OCI-LY7 (cell line): ENCODE measurements at regions of chr2 and their contacts with region 1.

Region 1: DNA sequence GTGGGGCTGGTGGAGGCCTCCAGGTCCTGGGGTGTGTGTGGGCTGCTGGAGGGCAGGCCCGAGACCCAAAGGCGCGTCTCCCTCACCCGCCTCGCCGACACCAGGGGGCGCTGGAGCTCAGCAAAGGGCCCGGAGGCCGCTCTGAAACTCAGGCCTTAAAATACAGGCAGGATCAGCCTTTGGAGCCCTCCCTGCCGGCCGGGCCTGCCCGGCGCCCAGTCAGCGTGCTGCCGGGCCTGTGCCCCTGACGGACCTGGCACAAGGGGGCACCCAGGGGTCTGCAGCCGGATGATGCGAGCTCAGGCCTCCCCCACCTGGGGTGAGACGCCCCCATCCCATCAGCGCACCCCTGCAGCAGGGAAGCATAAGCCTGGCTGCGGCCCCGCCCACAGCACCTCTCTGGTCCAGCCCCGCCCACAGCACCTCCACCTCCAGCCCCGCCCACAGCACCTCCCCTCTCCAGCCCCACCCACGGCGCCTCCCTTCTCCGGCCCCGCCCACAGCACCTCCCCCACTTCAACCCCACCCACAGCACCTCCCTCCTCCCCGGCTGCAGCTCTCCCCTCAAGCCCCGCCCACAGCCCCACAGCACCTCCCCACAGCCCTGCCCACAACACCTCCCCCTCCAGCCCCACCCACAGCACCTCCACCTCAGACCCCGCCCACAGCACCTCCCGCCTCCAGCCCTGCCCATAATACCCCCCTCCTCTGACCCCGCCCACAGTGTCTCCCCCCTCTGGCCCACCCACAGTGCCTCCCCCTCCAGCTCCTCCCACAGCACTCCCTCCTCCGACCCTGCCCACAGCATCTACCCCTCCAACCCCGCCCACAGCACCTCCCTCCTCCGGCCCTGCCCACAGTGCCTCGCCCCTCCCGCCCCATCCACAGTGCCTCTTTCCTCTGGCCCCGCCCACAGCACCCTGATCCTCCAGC is 92.8 kb upstream of the OTOS start:
- DNase-seq: peak; percentile 76
- H3K4me3 ChIP-seq: peak overlapping the region; percentile 55
- H3K27ac ChIP-seq: no peak overlapping the region
- H3K4me1 ChIP-seq: peaks cover 8% of the 10 kb centered on the region
- CTCF ChIP-seq: peak; percentile 74

Region 2: DNA sequence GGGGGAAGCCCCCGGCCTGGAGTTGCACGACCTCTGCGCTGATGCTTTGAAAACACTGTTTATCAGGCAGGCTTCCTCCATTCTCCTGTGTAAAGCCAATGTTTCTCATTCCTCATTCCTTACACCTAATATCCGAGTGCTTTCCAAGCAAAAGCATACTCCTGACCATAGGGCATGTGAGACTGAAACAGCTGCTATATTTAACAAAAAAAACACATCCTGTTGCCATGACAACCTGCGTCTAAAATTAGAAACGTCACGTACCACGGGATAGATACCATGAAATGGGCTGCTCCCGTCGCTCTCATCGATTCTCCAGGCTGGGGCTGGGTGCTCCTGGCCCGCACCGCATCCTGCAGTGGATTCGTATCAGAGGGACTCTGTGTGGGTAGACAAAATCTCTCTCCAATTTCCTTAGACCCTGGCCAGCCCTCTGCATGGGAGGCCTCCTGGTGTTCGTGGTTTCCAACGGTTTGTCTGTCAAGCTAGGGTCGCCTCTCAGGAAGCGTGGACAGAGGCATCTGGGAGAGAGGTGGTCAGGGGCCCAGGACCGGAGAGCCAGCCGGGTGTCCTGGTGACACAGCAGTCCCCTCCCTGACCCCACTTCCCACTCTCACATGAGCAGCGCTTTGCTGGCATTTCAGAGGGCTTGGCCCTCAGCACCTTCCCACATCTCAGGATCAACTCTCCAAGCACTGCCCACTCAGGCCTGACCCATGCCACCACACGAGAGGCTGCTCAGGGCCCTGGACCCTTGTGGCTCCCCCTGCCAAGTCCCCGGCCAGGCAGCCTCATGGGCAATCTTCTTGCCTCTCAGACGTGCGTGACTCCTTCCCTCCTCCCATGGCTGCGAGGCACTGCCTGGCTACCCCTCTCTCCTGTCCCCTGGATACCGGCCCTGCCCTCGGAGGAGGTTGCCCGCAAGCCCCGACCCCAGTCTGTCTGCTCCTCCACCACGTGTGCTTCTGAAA is 476.2 kb before region 1 on chr2:
- CTCF ChIA-PET with region 1: no interaction called
- POLR2A ChIA-PET with region 1: no interaction called
- intact Hi-C with region 1: no loop called
- DNase-seq: no peak
- H3K4me3 ChIP-seq: no peak overlapping the region
- H3K27ac ChIP-seq: no peak overlapping the region
- H3K4me1 ChIP-seq: peaks cover under 1% of the 10 kb centered on the region
- CTCF ChIP-seq: no peak

Region 3: DNA sequence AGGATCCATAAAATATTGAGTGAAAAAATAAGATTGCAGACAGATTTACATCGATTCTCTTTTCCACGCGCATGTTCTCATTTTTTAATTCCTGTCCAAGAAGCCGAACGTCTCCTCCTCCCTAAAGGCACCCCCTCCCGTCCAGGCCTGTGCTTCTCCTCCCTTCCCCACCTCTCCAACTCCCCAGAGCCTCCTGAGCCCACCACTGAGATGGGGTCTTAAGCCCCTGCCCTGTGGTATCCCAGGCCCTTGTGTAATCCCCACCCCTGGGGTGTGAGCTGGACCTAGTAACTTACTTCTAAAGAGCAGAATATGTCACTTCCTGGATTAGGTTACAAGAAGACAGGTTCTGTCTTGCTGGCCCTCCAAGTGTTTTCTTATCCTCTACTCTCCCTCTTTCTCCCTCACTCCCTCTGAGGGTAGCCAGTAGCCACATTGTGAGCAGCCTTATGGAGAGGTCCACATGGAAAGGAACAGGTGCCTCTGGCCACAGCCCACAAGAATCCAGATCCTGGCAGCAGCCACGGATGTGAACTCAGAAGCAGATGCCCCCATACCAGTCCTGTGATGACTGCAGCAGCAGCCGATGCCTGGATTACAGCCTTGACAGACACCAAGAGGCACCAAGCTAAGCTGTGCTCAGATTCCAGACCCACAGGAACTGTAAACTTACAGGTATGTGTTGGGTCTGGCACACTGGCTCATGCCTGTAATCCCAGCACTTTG is 53.1 kb before region 1 on chr2:
- CTCF ChIA-PET with region 1: no interaction called
- POLR2A ChIA-PET with region 1: no interaction called
- intact Hi-C with region 1: no loop called
- DNase-seq: no peak
- H3K4me3 ChIP-seq: no peak overlapping the region
- H3K27ac ChIP-seq: no peak overlapping the region
- H3K4me1 ChIP-seq: no peaks in the 10 kb centered on the region
- CTCF ChIP-seq: no peak

Region 4: GRCh38 chr2:240448396-240449162 is 215.4 kb after region 1 on chr2:
- CTCF ChIA-PET with region 1: interaction called, 10 read pairs
- POLR2A ChIA-PET with region 1: no interaction called
- intact Hi-C with region 1: no loop called
- DNase-seq: no peak
- H3K4me3 ChIP-seq: no peak overlapping the region
- H3K27ac ChIP-seq: no peak overlapping the region
- H3K4me1 ChIP-seq: no peaks in the 10 kb centered on the region
- CTCF ChIP-seq: no peak